CD8-positive, alpha-beta T cell (primary cell): ENCODE measurements at regions of chr9 and their contacts with region 1.

Region 1: GRCh38 chr9:94900222-94901018 is 173.9 kb downstream of the AOPEP start:
- DNase-seq: no peak
- ATAC-seq: no peak
- H3K4me3 ChIP-seq: no peak overlapping the region
- H3K4me3 Mint-ChIP-seq: no peak overlapping the region
- H3K27ac ChIP-seq: no peak overlapping the region
- H3K27ac Mint-ChIP-seq: no peak overlapping the region
- H3K4me1 ChIP-seq: no peaks in the 10 kb centered on the region
- H3K4me1 Mint-ChIP-seq: no peaks in the 10 kb centered on the region
- H3K27me3 ChIP-seq: no peaks in the 10 kb centered on the region
- H3K27me3 Mint-ChIP-seq: no peaks in the 10 kb centered on the region
- CTCF ChIP-seq: no peak

Region 2: GRCh38 chr9:94843134-94843533 is 57.3 kb before region 1 on chr9:
- CTCF ChIA-PET with region 1: no interaction called
- POLR2A ChIA-PET with region 1: no interaction called
- intact Hi-C with region 1: loop called in 1 of 2 experiments (anchors 5 kb)
- DNase-seq: no peak
- ATAC-seq: no peak
- H3K4me3 ChIP-seq: no peak overlapping the region
- H3K4me3 Mint-ChIP-seq: no peak overlapping the region
- H3K27ac ChIP-seq: no peak overlapping the region
- H3K27ac Mint-ChIP-seq: peak overlapping the region; percentile 1
- H3K4me1 ChIP-seq: no peaks in the 10 kb centered on the region
- H3K4me1 Mint-ChIP-seq: peaks cover 14% of the 10 kb centered on the region
- H3K27me3 ChIP-seq: peaks cover 0 to 2% of the 10 kb centered on the region in 2 experiments
- H3K27me3 Mint-ChIP-seq: no peaks in the 10 kb centered on the region
- CTCF ChIP-seq: no peak

Region 3: DNA sequence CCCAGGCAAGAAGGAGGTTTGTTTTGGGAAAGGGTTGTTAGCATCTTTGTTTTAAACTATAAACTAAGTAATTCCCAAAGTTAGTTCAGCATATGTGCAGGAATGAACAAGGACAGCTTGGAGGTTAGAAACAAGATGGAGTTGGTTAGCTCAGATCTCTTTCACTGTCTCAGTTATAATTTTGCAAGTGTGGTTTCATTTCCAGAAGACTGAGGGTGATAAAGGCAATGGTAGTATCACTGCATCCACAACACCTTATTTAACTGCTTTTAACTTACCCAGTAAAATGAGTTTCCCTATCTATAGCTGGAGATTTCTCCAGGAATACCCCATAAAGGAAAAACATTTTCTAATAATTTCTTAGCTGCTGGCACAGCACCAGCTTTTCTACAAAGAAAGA is 21.2 kb before region 1 on chr9:
- CTCF ChIA-PET with region 1: no interaction called
- POLR2A ChIA-PET with region 1: no interaction called
- intact Hi-C with region 1: no loop called
- DNase-seq: no peak
- ATAC-seq: no peak
- H3K4me3 ChIP-seq: no peak overlapping the region
- H3K4me3 Mint-ChIP-seq: no peak overlapping the region
- H3K27ac ChIP-seq: no peak overlapping the region
- H3K27ac Mint-ChIP-seq: no peak overlapping the region
- H3K4me1 ChIP-seq: no peaks in the 10 kb centered on the region
- H3K4me1 Mint-ChIP-seq: peaks cover 8% of the 10 kb centered on the region
- H3K27me3 ChIP-seq: no peaks in the 10 kb centered on the region
- H3K27me3 Mint-ChIP-seq: no peaks in the 10 kb centered on the region
- CTCF ChIP-seq: no peak